H1 (cell line): ENCODE measurements at regions of chr19 and their contacts with region 1.

Region 1: GRCh38 chr19:41123716-41124294 is 9.6 kb downstream of the CYP2F1 start:
- DNase-seq: no peak
- H3K4me3 ChIP-seq: no peak overlapping the region
- H3K27ac ChIP-seq: no peak overlapping the region
- H3K4me1 ChIP-seq: peaks cover 0 to 5% (median 3%) of the 10 kb centered on the region in 4 experiments; a peak in 3 of 7 replicates
- H3K27me3 ChIP-seq: peaks cover 0 to 1% (median 0%) of the 10 kb centered on the region in 4 experiments; a peak in 1 of 7 replicates
- CTCF ChIP-seq: no peak
- EP300 ChIP-seq: no peak
- POLR2A ChIP-seq: no peak
- RAD21 ChIP-seq: no peak

Region 2: DNA sequence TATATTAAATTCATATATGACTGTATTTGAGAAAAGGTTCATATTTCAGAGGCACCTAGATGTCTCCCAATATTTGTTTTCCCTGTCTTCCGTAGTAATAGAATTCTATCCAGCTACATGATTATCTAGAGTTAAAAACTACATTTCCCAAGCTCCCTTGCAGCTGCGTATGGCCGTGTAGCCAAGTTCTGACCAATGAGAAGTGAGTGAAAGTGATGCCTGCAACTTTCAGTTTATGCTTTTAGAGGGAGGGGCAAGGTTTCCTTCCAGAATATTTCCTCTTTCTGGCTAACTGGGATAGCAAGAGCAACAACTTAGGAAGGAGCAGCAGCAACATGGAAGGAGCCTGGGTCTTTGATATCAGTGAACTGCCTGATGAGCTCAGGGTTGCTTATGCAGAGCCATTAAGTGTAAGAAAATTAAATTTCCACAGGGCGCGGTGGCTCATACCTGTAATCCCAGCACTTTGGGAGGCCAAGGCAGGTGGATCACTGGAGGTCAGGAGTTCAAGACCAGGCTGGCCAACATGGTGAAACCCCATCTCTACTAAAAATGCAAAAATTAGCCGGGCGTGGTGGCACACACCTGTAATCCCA is 58.7 kb before region 1 on chr19:
- CTCF ChIA-PET with region 1: no interaction called
- POLR2A ChIA-PET with region 1: no interaction called
- DNase-seq: peak in 1 of 2 experiments; percentile 2
- H3K4me3 ChIP-seq: no peak overlapping the region
- H3K27ac ChIP-seq: no peak overlapping the region
- H3K4me1 ChIP-seq: no peaks in the 10 kb centered on the region
- H3K27me3 ChIP-seq: no peaks in the 10 kb centered on the region
- CTCF ChIP-seq: no peak
- EP300 ChIP-seq: no peak
- POLR2A ChIP-seq: no peak
- RAD21 ChIP-seq: no peak

Region 3: DNA sequence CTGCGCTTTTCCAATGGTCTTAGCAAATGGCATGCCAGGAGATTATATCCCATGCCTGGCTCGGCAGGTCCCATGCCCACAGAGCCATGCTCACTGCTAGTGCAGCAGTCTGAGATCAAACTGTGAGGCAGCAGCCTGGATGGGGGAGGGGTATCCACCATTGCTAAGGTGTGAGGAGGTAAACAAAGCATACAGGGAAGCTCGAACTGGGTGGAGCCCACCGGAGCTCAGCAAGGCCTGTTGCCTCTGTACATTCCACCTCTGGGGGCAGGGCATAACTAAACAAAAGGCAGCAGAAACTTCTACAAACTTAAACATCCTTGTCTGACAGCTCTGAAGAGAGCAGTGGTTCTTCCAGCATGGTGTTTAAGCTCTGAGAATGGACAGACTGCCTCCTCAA is 25.0 kb before region 1 on chr19:
- CTCF ChIA-PET with region 1: no interaction called
- POLR2A ChIA-PET with region 1: no interaction called
- DNase-seq: no peak
- H3K4me3 ChIP-seq: no peak overlapping the region
- H3K27ac ChIP-seq: no peak overlapping the region
- H3K4me1 ChIP-seq: peaks cover 0 to 2% (median 0%) of the 10 kb centered on the region in 4 experiments; a peak in 1 of 7 replicates
- H3K27me3 ChIP-seq: no peaks in the 10 kb centered on the region; a peak in 1 of 7 replicates
- CTCF ChIP-seq: no peak
- EP300 ChIP-seq: no peak
- POLR2A ChIP-seq: no peak
- RAD21 ChIP-seq: no peak

Region 4: DNA sequence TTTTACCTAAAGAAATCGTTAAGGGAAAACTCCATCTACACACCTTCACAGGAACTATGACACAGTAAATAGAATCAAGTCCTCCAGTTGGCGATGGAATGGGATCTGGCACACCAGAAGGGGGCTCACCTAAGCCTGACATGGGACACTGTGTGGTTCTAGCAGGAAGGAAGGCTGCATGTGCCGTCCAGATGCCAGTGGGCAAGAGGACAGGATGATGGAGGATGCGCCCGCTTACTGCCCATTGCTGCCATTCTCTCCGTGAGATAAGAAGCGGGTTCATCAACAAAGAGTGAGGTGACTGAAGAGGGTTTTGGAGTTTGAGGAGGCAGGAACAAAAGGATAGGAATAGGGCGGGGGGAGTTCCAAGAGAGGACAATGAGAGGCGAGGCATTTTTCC is 12.5 kb before region 1 on chr19:
- CTCF ChIA-PET with region 1: interaction called, 10 read pairs
- POLR2A ChIA-PET with region 1: interaction called, 3 read pairs
- DNase-seq: no peak
- H3K4me3 ChIP-seq: no peak overlapping the region
- H3K27ac ChIP-seq: no peak overlapping the region
- H3K4me1 ChIP-seq: no peaks in the 10 kb centered on the region
- H3K27me3 ChIP-seq: no peaks in the 10 kb centered on the region
- CTCF ChIP-seq: no peak
- EP300 ChIP-seq: no peak
- POLR2A ChIP-seq: no peak
- RAD21 ChIP-seq: no peak; a peak in 1 of 4 replicates

Region 5: GRCh38 chr19:41172297-41173164 is 48.7 kb after region 1 on chr19:
- CTCF ChIA-PET with region 1: no interaction called
- POLR2A ChIA-PET with region 1: no interaction called
- DNase-seq: no peak
- H3K4me3 ChIP-seq: no peak overlapping the region
- H3K27ac ChIP-seq: no peak overlapping the region
- H3K4me1 ChIP-seq: peaks cover 0 to 14% (median 5%) of the 10 kb centered on the region in 4 experiments; a peak in 6 of 7 replicates
- H3K27me3 ChIP-seq: no peaks in the 10 kb centered on the region
- CTCF ChIP-seq: peak; percentile 34 to 47 (median 45); a peak in 3 of 4 replicates
- EP300 ChIP-seq: no peak
- POLR2A ChIP-seq: no peak
- RAD21 ChIP-seq: peak; percentile 50 to 52